ENCODE measurements at regions of chr21 and their contacts with region 1.

Region 1: DNA sequence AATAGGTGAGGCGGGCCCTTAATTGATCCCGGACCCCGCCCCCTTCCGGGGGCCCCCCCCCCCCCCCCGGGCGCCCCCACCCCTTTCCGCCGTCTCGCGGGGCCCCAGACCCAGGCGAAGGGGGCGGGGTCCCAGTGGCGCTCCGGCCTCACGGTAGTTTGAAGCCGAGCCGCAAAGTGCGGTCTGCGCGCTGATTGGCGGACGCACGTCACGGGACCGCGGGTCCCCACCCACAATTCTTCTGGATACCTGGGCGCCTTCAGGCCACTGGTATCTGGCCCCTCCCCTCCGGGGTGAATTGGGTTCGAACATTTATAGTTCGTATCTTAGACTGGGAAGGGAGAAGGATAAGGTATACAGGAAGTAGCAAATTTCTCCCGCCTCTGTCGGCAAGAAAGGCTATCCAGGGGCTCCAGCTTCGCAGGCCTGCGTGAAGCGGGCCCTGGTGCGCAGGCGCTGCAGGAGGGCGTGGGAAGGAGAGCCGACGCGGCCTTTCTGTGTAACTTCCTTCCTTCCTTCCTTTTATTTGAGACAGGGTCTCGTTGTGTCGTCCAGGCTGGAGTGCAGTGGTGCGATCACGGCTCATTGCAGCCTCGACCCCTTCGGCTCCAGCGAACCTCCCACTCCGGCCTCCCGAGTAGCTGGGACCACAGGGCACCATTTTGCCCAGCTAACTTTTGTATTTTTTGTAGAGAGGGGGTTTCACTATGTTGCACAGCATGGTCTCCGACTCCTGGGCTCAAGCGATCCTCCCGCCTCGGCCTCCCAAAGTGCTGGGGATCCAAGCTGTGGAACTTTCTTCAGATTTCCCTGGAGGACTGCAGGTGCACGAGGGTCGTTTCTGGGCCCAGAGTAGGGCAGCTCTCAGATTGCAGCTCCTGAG is 564 bp upstream of the HMGN1 start:
- DNase-seq: peak; percentile 96 to 97 (median 97)
- ATAC-seq: peak; percentile 95 to 97 (median 97)
- H3K4me3 ChIP-seq: peak overlapping the region; percentile 62 to 93 (median 80)
- H3K27ac ChIP-seq: peak overlapping the region; percentile 86 to 97 (median 93)
- H3K4me1 ChIP-seq: peaks cover 0 to 39% (median 24%) of the 10 kb centered on the region in 12 donors
- H3K27me3 ChIP-seq: no peaks in the 10 kb centered on the region
- CTCF ChIP-seq: no peak
- POLR2A ChIP-seq: peak in 1 of 2 donors; percentile 33

Region 2: DNA sequence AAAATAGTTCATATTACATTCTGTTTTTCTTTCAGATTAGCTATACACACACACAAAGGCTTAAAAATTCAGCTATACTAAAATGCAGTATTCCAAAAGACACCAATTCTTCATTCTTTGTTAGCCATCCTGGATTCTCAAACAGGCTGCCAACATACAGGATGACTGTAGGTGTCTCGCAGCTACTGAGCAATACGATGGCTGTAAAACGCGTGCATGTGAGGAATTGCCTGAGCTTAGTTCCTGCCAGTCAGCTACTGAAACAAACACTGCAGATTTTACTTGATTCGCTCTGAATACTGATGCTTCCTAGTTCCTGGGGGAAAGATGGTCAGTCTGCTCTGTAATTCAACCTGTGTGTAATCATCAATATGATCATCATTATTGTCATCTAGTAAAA is 24.2 kb after region 1 on chr21:
- intact Hi-C with region 1: loop called in 2 of 10 experiments (anchors 1 to 2 kb)
- DNase-seq: no peak
- ATAC-seq: no peak
- H3K4me3 ChIP-seq: no peak overlapping the region
- H3K27ac ChIP-seq: no peak overlapping the region
- H3K4me1 ChIP-seq: peaks cover 0 to 10% (median 0%) of the 10 kb centered on the region in 12 donors
- H3K27me3 ChIP-seq: peaks cover 0 to 4% (median 0%) of the 10 kb centered on the region in 9 donors
- CTCF ChIP-seq: peak in 3 of 12 donors; percentile 7 to 31 (median 29)
- POLR2A ChIP-seq: no peak

Region 3: DNA sequence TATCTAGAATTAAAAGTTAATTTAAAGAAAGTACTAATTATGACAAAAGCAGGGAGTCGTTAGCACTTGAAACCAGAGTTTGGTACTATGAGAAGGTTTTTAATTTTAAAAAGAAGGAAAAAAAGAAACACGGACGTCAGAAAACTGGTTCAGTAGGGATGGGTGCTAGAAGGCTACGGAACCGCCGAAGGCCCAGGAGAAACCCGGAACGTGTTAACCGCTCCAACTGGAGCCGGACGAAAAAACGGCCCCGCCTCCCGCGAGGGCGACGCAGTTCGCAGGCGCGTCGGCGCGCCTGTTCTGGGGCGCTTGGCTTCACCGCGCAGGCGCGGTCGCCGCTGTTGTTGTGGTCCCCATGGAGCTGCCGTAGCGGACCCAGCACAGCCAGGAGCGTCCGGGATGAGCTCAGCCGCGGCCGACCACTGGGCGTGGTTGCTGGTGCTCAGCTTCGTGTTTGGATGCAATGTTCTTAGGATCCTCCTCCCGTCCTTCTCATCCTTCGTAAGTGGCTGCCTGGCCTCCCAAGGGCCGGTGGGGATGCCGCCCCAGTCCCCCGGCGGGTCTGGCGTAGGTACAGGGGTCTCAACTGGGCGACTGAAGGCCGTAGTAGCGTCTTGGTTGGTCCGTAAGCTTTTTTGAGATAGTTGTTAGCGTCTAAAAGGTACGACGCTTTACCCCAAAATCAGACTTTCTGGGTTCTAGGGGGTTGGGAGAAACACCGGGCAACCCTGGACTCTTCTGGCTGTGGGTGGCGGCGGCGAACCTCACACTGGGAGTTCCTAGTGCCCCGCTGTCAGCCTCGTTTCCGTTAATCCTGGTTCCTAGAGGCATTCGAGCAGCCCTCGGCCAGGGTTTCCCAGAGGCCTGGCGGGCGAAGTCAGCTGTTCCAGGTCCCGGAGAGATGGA is 30.8 kb after region 1 on chr21:
- intact Hi-C with region 1: loop called in 6 of 10 experiments (anchors 2 to 5 kb)
- DNase-seq: peak; percentile 95 to 99 (median 98)
- ATAC-seq: peak; percentile 96 to 99 (median 99)
- H3K4me3 ChIP-seq: peak overlapping the region; percentile 49 to 99 (median 82)
- H3K27ac ChIP-seq: peak overlapping the region; percentile 79 to 97 (median 88)
- H3K4me1 ChIP-seq: peaks cover 0 to 20% (median 10%) of the 10 kb centered on the region in 12 donors
- H3K27me3 ChIP-seq: peaks cover 0 to 4% (median 0%) of the 10 kb centered on the region in 9 donors
- CTCF ChIP-seq: no peak
- POLR2A ChIP-seq: peak in 1 of 2 donors; percentile 80

Region 4: GRCh38 chr21:39502631-39503030 is 153.2 kb after region 1 on chr21:
- intact Hi-C with region 1: no loop called
- DNase-seq: no peak
- ATAC-seq: peak in 1 of 4 donors; percentile 26
- H3K4me3 ChIP-seq: no peak overlapping the region
- H3K27ac ChIP-seq: no peak overlapping the region
- H3K4me1 ChIP-seq: no peaks in the 10 kb centered on the region
- H3K27me3 ChIP-seq: no peaks in the 10 kb centered on the region
- CTCF ChIP-seq: no peak
- POLR2A ChIP-seq: no peak